ENCODE measurements at regions of chr5 and their contacts with region 1.

Region 1: GRCh38 chr5:36552626-36553393 is 53.6 kb upstream of the SLC1A3 start:
- H3K4me3 Mint-ChIP-seq: no peak overlapping the region
- H3K27ac Mint-ChIP-seq: no peak overlapping the region
- H3K4me1 Mint-ChIP-seq: no peaks in the 10 kb centered on the region
- H3K27me3 Mint-ChIP-seq: peaks cover 1% of the 10 kb centered on the region

Region 2: GRCh38 chr5:36494756-36495601 is 57.8 kb before region 1 on chr5:
- intact Hi-C with region 1: loop called (anchors 5 kb)
- H3K4me3 Mint-ChIP-seq: no peak overlapping the region
- H3K27ac Mint-ChIP-seq: no peak overlapping the region
- H3K4me1 Mint-ChIP-seq: peaks cover 10% of the 10 kb centered on the region
- H3K27me3 Mint-ChIP-seq: peaks cover 3% of the 10 kb centered on the region

Measured in dendritic cell treated with granulocyte-macrophage colony-stimulating factor and Interleukin-4, amounts not matched to agents 40 ng/mL and 50 ng/mL, for 4 days (primary cell).